ENCODE measurements at regions of chr5 and their contacts with region 1.

Region 1: GRCh38 chr5:164532235-164532900 is 1026.9 kb downstream of the MAT2B start:
- DNase-seq: peak; percentile 38
- H3K4me3 Mint-ChIP-seq: no peak overlapping the region
- H3K27ac Mint-ChIP-seq: peak overlapping the region; percentile 87
- H3K4me1 Mint-ChIP-seq: peaks cover 28% of the 10 kb centered on the region
- H3K27me3 Mint-ChIP-seq: no peaks in the 10 kb centered on the region
- CTCF ChIP-seq: no peak

Region 2: GRCh38 chr5:164383662-164384061 is 148.7 kb before region 1 on chr5:
- CTCF ChIA-PET with region 1: no interaction called
- POLR2A ChIA-PET with region 1: no interaction called
- intact Hi-C with region 1: no loop called
- DNase-seq: no peak
- H3K4me3 Mint-ChIP-seq: no peak overlapping the region
- H3K27ac Mint-ChIP-seq: no peak overlapping the region
- H3K4me1 Mint-ChIP-seq: no peaks in the 10 kb centered on the region
- H3K27me3 Mint-ChIP-seq: no peaks in the 10 kb centered on the region
- CTCF ChIP-seq: no peak

Region 3: GRCh38 chr5:164518052-164518740 is 14.2 kb before region 1 on chr5:
- CTCF ChIA-PET with region 1: interaction called, 8 read pairs
- POLR2A ChIA-PET with region 1: interaction called, 12 read pairs
- intact Hi-C with region 1: no loop called
- DNase-seq: no peak
- H3K4me3 Mint-ChIP-seq: no peak overlapping the region
- H3K27ac Mint-ChIP-seq: no peak overlapping the region
- H3K4me1 Mint-ChIP-seq: no peaks in the 10 kb centered on the region
- H3K27me3 Mint-ChIP-seq: no peaks in the 10 kb centered on the region
- CTCF ChIP-seq: no peak

Region 4: GRCh38 chr5:164600274-164600673 is 67.9 kb after region 1 on chr5:
- CTCF ChIA-PET with region 1: no interaction called
- POLR2A ChIA-PET with region 1: interaction called, 15 read pairs
- intact Hi-C with region 1: no loop called
- DNase-seq: peak; percentile 84
- H3K4me3 Mint-ChIP-seq: no peak overlapping the region
- H3K27ac Mint-ChIP-seq: peak overlapping the region; percentile 89
- H3K4me1 Mint-ChIP-seq: peaks cover 9% of the 10 kb centered on the region
- H3K27me3 Mint-ChIP-seq: no peaks in the 10 kb centered on the region
- CTCF ChIP-seq: no peak

Region 5: DNA sequence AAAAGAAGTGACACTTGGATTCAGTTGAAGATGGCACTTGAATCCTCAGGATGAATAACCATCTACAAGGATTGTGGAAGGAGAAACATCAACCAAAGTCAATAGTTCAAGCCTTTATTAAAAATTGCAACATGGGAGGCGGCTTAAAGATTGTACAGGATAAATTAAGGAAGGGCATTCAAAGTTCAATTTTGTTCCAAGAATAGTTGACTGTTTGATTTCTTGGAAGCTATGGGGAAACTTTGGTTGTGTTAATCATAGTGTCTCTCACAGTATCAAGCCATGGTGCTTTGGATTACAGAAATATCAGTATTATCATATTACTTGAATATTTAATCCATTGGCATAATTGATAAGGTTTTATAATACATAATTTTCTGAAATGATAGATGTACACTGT is 817.4 kb after region 1 on chr5:
- CTCF ChIA-PET with region 1: no interaction called
- POLR2A ChIA-PET with region 1: no interaction called
- intact Hi-C with region 1: no loop called
- DNase-seq: no peak
- H3K4me3 Mint-ChIP-seq: no peak overlapping the region
- H3K27ac Mint-ChIP-seq: no peak overlapping the region
- H3K4me1 Mint-ChIP-seq: peaks cover 6% of the 10 kb centered on the region
- H3K27me3 Mint-ChIP-seq: no peaks in the 10 kb centered on the region
- CTCF ChIP-seq: no peak

Measured in MCF 10A (cell line).